GM10248 (cell line): ENCODE measurements at regions of chr14 and their contacts with region 1.

Region 1: GRCh38 chr14:74945823-74946682 is 9.3 kb downstream of the PGF start:
- DNase-seq: peak; percentile 91
- CTCF ChIP-seq: peak; percentile 98

Region 2: GRCh38 chr14:74893614-74894091 is 52.4 kb before region 1 on chr14:
- CTCF ChIA-PET with region 1: interaction called, 15 read pairs
- POLR2A ChIA-PET with region 1: no interaction called
- DNase-seq: no peak
- CTCF ChIP-seq: no peak

Region 3: DNA sequence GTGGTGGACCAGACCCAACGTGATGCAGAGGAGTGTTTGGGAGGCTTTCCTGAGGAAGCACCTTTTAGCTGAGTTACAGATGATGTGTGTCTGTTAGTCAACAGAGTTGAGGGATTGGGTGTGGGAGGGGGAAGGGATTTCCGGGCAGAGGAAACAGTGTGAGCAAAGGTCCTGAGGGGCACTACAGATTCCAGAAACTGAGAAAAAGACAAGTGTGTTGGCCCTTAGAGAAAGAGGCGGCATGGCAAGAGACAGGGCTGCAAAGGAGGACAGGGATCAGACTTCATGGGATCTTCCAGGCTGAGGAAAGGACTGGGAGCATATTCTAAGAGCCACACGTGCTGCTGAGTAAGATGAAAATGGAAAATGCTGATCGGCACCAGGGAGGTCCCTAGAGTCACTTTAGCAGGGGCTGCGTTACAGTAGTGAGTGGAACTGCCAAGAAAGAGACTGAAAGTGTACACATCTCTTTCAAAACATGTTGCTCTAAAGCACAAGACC is 13.6 kb before region 1 on chr14:
- CTCF ChIA-PET with region 1: interaction called, 33 read pairs
- POLR2A ChIA-PET with region 1: no interaction called
- DNase-seq: no peak
- CTCF ChIP-seq: no peak

Region 4: DNA sequence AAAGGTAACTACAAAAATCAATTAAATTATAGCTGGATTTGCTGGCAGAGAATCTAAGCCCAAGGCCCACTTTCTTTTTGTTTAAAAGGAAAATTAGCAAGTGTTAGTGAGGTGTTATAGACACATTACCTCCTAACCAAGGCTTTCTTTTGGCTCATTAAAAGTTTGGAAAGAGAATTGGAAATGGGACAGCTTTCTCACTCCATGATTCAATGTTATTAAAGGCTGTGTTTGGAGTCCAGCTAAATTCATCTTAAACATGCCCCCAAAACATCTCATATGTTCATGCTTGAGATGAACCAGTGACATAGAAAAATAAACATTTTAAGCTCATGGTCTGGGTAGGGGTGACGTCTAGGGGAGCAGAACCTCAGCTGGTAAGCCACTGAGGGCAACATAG is 22.8 kb after region 1 on chr14:
- CTCF ChIA-PET with region 1: interaction called, 93 read pairs
- POLR2A ChIA-PET with region 1: no interaction called
- DNase-seq: no peak
- CTCF ChIP-seq: no peak

Region 5: GRCh38 chr14:75063407-75064213 is 117.6 kb after region 1 on chr14 and contains the start of gene ACYP1:
- CTCF ChIA-PET with region 1: interaction called, 12 read pairs
- POLR2A ChIA-PET with region 1: no interaction called
- DNase-seq: peak; percentile 96
- CTCF ChIP-seq: no peak